ENCODE measurements at regions of chr21 and their contacts with region 1.

Region 1: GRCh38 chr21:34888569-34889319 is 160.4 kb downstream of the RUNX1 start:
- DNase-seq: peak; percentile 92 to 96 (median 95)
- ATAC-seq: peak; percentile 86 to 93 (median 90)
- H3K4me3 ChIP-seq: peak overlapping the region; percentile 42 to 84 (median 66)
- H3K27ac ChIP-seq: peak overlapping the region; percentile 70 to 98 (median 88)
- H3K4me1 ChIP-seq: peaks cover 0 to 52% (median 15%) of the 10 kb centered on the region in 12 donors
- H3K27me3 ChIP-seq: peaks cover 25 to 85% (median 68%) of the 10 kb centered on the region in 9 donors
- CTCF ChIP-seq: no peak
- POLR2A ChIP-seq: peak in 1 of 2 donors; percentile 88

Region 2: GRCh38 chr21:34235514-34235913 is 653.2 kb before region 1 on chr21:
- intact Hi-C with region 1: no loop called
- DNase-seq: no peak
- ATAC-seq: no peak
- H3K4me3 ChIP-seq: no peak overlapping the region
- H3K27ac ChIP-seq: no peak overlapping the region
- H3K4me1 ChIP-seq: no peaks in the 10 kb centered on the region
- H3K27me3 ChIP-seq: no peaks in the 10 kb centered on the region
- CTCF ChIP-seq: no peak
- POLR2A ChIP-seq: no peak

Region 3: DNA sequence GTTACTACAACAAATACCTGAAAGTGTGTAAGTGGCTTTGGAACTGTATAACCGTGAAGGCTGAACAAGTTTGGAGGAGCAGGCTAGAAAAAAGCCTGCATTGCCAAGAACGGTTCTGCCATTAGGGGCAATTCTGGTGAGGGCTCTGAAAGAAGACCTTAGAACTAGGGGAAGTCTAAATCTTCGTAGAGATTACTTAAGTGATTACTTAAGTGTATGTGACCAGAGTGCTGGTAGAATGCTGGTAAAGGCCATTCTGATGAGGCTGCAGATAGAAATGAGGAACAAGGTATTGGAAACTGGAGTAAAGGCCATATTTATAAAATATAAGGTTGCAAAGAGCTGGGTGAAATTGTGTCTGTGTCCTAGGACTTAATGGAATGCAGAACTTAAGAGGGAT is 61.9 kb before region 1 on chr21:
- intact Hi-C with region 1: no loop called
- DNase-seq: no peak
- ATAC-seq: peak in 3 of 4 donors; percentile 18 to 61 (median 45)
- H3K4me3 ChIP-seq: no peak overlapping the region
- H3K27ac ChIP-seq: peak overlapping the region in 1 of 12 donors; percentile 65
- H3K4me1 ChIP-seq: peaks cover 0 to 61% (median 0%) of the 10 kb centered on the region in 12 donors
- H3K27me3 ChIP-seq: no peaks in the 10 kb centered on the region
- CTCF ChIP-seq: no peak
- POLR2A ChIP-seq: no peak

Region 4: GRCh38 chr21:35051287-35051818 is 162.6 kb after region 1 on chr21:
- intact Hi-C with region 1: loop called in 4 of 10 experiments (anchors 5 to 10 kb)
- DNase-seq: peak; percentile 82 to 91 (median 86)
- ATAC-seq: peak; percentile 86 to 94 (median 91)
- H3K4me3 ChIP-seq: no peak overlapping the region
- H3K27ac ChIP-seq: peak overlapping the region in 7 of 12 donors; percentile 13 to 76 (median 37)
- H3K4me1 ChIP-seq: peaks cover 0 to 47% (median 12%) of the 10 kb centered on the region in 12 donors
- H3K27me3 ChIP-seq: peaks cover 0 to under 1% (median 0%) of the 10 kb centered on the region in 9 donors
- CTCF ChIP-seq: peak in 11 of 12 donors; percentile 43 to 71 (median 60)
- POLR2A ChIP-seq: no peak

Region 5: GRCh38 chr21:35390013-35390776 is 501.5 kb after region 1 on chr21:
- intact Hi-C with region 1: loop called in 3 of 10 experiments (anchors 5 to 10 kb)
- DNase-seq: no peak
- ATAC-seq: peak in 1 of 4 donors; percentile 31
- H3K4me3 ChIP-seq: no peak overlapping the region
- H3K27ac ChIP-seq: no peak overlapping the region
- H3K4me1 ChIP-seq: no peaks in the 10 kb centered on the region
- H3K27me3 ChIP-seq: peaks cover 0 to 6% (median 0%) of the 10 kb centered on the region in 9 donors
- CTCF ChIP-seq: no peak
- POLR2A ChIP-seq: no peak

Region 6: DNA sequence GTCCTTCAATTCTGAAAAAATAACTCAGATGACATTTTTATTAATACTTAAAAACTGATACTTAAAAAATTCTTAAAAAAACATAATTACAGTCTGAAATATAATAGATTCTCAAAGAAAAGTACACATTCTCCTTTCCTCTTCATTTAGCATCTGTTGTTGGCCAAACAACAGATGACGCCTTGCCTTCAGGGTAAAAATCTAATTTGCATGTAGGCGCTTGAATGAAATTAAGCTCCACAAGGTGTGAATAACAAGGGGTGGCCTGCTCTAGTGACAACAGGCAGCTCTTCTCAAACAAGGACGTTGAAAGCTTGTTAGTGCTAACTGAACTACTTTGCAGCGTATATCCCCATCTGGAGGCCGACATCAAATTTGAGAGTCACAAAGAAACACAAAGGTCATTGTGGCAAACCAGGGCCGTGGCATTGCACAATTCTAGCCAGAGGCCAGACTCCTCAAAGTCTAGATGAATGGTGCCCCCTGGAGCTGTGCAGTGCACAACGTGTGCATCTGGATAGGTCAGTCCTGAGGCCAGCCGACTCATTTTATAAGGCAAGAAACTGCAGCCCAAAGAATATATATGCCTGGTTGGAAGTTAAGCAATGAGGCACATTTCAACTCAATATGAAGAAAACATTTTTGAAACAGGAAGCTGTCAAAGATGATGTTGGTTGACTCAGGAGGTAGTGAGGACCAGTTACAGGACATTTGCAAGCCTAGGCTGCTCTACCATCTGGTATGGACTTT is 619.6 kb after region 1 on chr21:
- intact Hi-C with region 1: loop called in 3 of 10 experiments (anchors 5 to 10 kb)
- DNase-seq: peak; percentile 53 to 75 (median 66)
- ATAC-seq: peak; percentile 45 to 93 (median 77)
- H3K4me3 ChIP-seq: no peak overlapping the region
- H3K27ac ChIP-seq: peak overlapping the region in 3 of 12 donors; percentile 20 to 90 (median 48)
- H3K4me1 ChIP-seq: peaks cover 0 to 62% (median 0%) of the 10 kb centered on the region in 12 donors
- H3K27me3 ChIP-seq: peaks cover 0 to 27% (median 0%) of the 10 kb centered on the region in 9 donors
- CTCF ChIP-seq: peak in 8 of 12 donors; percentile 10 to 45 (median 31)
- POLR2A ChIP-seq: no peak

Region 7: GRCh38 chr21:35833991-35834390 is 945.2 kb after region 1 on chr21:
- intact Hi-C with region 1: loop called in 2 of 10 experiments (anchors 5 to 10 kb)
- DNase-seq: no peak
- ATAC-seq: peak in 2 of 4 donors; percentile 62 to 72
- H3K4me3 ChIP-seq: no peak overlapping the region
- H3K27ac ChIP-seq: no peak overlapping the region
- H3K4me1 ChIP-seq: peaks cover 0 to 7% (median 0%) of the 10 kb centered on the region in 12 donors
- H3K27me3 ChIP-seq: peaks cover 0 to 4% (median 0%) of the 10 kb centered on the region in 9 donors
- CTCF ChIP-seq: no peak
- POLR2A ChIP-seq: no peak

Region 8: GRCh38 chr21:35932232-35932911 is 1043.6 kb after region 1 on chr21:
- intact Hi-C with region 1: loop called in 1 of 10 experiments (anchors 5 kb)
- DNase-seq: peak; percentile 70 to 86 (median 78)
- ATAC-seq: peak; percentile 90 to 97 (median 96)
- H3K4me3 ChIP-seq: peak overlapping the region in 1 of 12 donors; percentile 25
- H3K27ac ChIP-seq: peak overlapping the region; percentile 11 to 91 (median 77)
- H3K4me1 ChIP-seq: peaks cover 0 to 33% (median 22%) of the 10 kb centered on the region in 12 donors
- H3K27me3 ChIP-seq: no peaks in the 10 kb centered on the region
- CTCF ChIP-seq: no peak
- POLR2A ChIP-seq: no peak